ENCODE measurements at regions of chr6 and their contacts with region 1.

Region 1: GRCh38 chr6:80331974-80332373 is 225.5 kb downstream of the BCKDHB start:
- DNase-seq: no peak
- ATAC-seq: no peak
- H3K4me3 ChIP-seq: no peak overlapping the region
- H3K27ac ChIP-seq: no peak overlapping the region
- H3K4me1 ChIP-seq: no peaks in the 10 kb centered on the region
- H3K27me3 ChIP-seq: no peaks in the 10 kb centered on the region
- CTCF ChIP-seq: no peak
- EP300 ChIP-seq: no peak
- POLR2A ChIP-seq: no peak
- RAD21 ChIP-seq: no peak

Region 2: GRCh38 chr6:80235647-80236046 is 96.3 kb before region 1 on chr6:
- CTCF ChIA-PET with region 1: no interaction called
- POLR2A ChIA-PET with region 1: no interaction called
- in situ Hi-C with region 1: no loop called
- intact Hi-C with region 1: loop called (anchors 5 kb)
- DNase-seq: no peak
- ATAC-seq: no peak
- H3K4me3 ChIP-seq: no peak overlapping the region
- H3K27ac ChIP-seq: no peak overlapping the region
- H3K4me1 ChIP-seq: no peaks in the 10 kb centered on the region
- H3K27me3 ChIP-seq: no peaks in the 10 kb centered on the region
- CTCF ChIP-seq: no peak
- EP300 ChIP-seq: no peak
- POLR2A ChIP-seq: no peak
- RAD21 ChIP-seq: 0 out of 4 replicates have a peak, but pooled peaks of 1 of the 2 experiments have one; percentile 16

Region 3: DNA sequence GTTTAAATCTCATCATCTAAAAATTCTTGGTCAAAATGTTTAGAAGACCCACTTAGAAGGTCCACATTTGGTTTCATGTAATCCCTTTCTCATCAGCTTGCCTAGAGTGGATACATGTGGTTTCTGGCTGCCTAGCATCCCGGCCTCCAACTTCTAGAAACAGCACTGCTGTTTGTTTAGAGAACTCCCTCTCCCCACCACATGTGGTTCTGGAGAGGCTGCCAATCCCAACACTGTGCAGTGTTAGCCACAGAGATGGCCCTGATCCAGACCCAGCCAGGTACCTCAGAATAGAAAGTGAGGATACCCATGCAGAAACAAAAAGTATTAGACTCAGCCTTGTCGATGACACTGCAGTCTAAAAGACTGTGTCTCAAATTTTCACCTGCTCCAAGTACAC is 16.3 kb after region 1 on chr6:
- CTCF ChIA-PET with region 1: no interaction called
- POLR2A ChIA-PET with region 1: no interaction called
- in situ Hi-C with region 1: no loop called
- intact Hi-C with region 1: no loop called
- DNase-seq: no peak
- ATAC-seq: no peak
- H3K4me3 ChIP-seq: no peak overlapping the region
- H3K27ac ChIP-seq: no peak overlapping the region
- H3K4me1 ChIP-seq: no peaks in the 10 kb centered on the region
- H3K27me3 ChIP-seq: no peaks in the 10 kb centered on the region
- CTCF ChIP-seq: no peak
- EP300 ChIP-seq: no peak
- POLR2A ChIP-seq: no peak
- RAD21 ChIP-seq: no peak

Region 4: GRCh38 chr6:80605165-80605989 is 273.4 kb after region 1 on chr6:
- CTCF ChIA-PET with region 1: no interaction called
- POLR2A ChIA-PET with region 1: no interaction called
- in situ Hi-C with region 1: no loop called
- intact Hi-C with region 1: no loop called
- DNase-seq: peak in 1 of 4 experiments; percentile 2
- ATAC-seq: no peak
- H3K4me3 ChIP-seq: no peak overlapping the region
- H3K27ac ChIP-seq: no peak overlapping the region
- H3K4me1 ChIP-seq: no peaks in the 10 kb centered on the region
- H3K27me3 ChIP-seq: no peaks in the 10 kb centered on the region
- CTCF ChIP-seq: peak in 1 of 3 experiments; percentile 21; a peak in 1 of 6 replicates
- EP300 ChIP-seq: no peak
- POLR2A ChIP-seq: no peak
- RAD21 ChIP-seq: 0 out of 4 replicates have a peak, but pooled peaks have one; percentile 14 to 21